Caco-2 (cell line): ENCODE measurements at regions of chr3 and their contacts with region 1.

Region 1: DNA sequence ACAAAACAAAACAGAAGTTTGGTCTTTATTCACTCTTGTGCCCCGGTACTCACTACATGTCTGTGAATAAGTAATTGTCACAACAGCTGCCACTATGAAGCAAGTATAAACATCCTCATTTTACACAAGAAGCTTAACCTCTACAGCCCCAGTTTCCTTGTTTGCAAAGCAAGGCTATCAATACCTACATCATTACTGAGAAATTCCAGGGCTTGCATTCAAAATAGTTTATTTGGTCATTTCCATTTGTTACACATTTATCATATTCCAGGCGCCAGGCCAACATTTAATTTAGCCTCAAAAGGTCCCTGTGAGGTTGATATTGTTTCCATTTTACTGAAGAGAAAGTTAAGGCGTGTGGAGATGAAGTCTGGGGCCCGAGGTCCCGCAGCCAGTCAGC is 161.4 kb upstream of the LRTM1 start:
- DNase-seq: no peak
- H3K4me3 ChIP-seq: no peak overlapping the region
- H3K4me3 Mint-ChIP-seq: no peak overlapping the region
- H3K27ac Mint-ChIP-seq: no peak overlapping the region
- H3K4me1 ChIP-seq: no peaks in the 10 kb centered on the region
- H3K4me1 Mint-ChIP-seq: no peaks in the 10 kb centered on the region
- H3K27me3 ChIP-seq: no peaks in the 10 kb centered on the region
- H3K27me3 Mint-ChIP-seq: peaks cover 18% of the 10 kb centered on the region
- CTCF ChIP-seq: no peak

Region 2: DNA sequence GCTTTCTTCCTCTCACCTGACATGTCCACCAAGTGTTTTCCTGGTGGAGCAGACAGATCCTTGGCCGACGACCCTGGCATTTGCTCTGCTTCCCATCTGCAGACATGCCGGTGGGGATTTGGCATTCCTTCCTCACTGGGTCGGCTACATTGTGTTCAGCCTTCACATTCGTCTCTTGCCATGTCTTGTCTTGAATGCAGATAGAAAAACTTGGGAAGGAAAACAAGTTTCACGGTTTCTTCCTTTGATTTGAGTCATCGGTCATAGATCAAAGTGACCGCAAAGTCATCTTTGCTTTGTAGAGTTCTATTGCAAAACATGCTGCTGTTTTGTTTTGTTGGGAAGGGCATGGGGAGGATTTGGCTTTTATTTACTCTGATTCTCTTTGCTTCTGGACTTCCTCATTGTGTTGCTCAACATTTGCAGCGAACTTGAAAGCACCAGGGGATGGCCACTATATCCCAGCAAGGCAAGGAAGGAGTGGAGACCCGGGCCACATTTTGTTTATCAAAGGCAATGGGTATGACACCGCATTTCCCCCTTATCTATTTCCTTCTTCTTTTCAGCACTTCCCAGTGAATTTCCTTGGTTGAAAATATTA is 645.5 kb before region 1 on chr3:
- CTCF ChIA-PET with region 1: interaction called, 11 read pairs
- POLR2A ChIA-PET with region 1: no interaction called
- intact Hi-C with region 1: no loop called
- DNase-seq: peak in 1 of 2 experiments; percentile 30
- H3K4me3 ChIP-seq: no peak overlapping the region
- H3K4me3 Mint-ChIP-seq: no peak overlapping the region
- H3K27ac Mint-ChIP-seq: no peak overlapping the region
- H3K4me1 ChIP-seq: no peaks in the 10 kb centered on the region; the same call in 1 of the 2 replicates
- H3K4me1 Mint-ChIP-seq: peaks cover 8% of the 10 kb centered on the region
- H3K27me3 ChIP-seq: no peaks in the 10 kb centered on the region
- H3K27me3 Mint-ChIP-seq: no peaks in the 10 kb centered on the region
- CTCF ChIP-seq: no peak

Region 3: DNA sequence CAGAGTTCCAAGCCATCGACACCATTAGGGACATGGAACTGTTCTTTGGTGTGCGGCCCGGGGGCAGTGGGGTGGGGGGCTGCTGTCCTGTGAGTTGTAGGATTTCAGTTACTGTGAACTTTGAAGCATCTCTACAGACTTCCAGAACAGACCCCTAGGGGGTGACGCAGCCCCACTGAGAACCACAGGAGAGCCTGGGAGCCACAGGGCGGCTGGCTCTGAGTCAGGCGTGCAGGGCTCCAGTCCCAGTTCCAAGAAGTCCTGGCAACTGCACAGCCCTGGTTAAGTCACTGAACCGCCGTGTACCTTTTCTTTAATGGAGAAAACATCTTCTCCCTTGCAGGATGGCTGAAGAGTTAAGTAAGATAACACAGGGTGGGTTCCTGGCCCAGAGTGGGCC is 137.8 kb before region 1 on chr3:
- CTCF ChIA-PET with region 1: no interaction called
- POLR2A ChIA-PET with region 1: no interaction called
- intact Hi-C with region 1: no loop called
- DNase-seq: peak; percentile 46 to 54
- H3K4me3 ChIP-seq: no peak overlapping the region
- H3K4me3 Mint-ChIP-seq: no peak overlapping the region
- H3K27ac Mint-ChIP-seq: no peak overlapping the region
- H3K4me1 ChIP-seq: no peaks in the 10 kb centered on the region
- H3K4me1 Mint-ChIP-seq: no peaks in the 10 kb centered on the region
- H3K27me3 ChIP-seq: no peaks in the 10 kb centered on the region
- H3K27me3 Mint-ChIP-seq: peaks cover 3% of the 10 kb centered on the region
- CTCF ChIP-seq: peak; percentile 49 to 72